ENCODE measurements at regions of chr5 and their contacts with region 1.

Region 1: DNA sequence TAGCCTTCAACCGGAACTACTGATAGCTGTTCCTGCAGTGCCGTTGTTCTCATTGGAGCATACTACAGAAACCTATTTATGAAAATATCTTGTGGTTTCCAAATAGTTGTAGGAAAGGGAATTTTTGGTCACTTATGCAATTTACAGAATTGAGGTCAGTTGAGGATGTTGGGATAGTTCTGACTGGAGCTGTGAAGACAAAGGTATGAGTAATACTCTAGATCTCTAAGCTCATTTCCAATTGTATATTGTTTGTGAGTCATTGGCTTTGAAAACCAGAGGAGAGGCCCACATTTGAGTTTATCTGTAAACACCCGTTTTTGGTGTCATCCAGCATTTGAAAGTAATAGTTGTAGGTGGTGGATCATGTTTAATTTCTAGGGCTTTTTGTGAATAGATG is 561.3 kb upstream of the WWC1 start:
- DNase-seq: no peak
- H3K4me3 ChIP-seq: no peak overlapping the region
- H3K27ac ChIP-seq: no peak overlapping the region
- H3K4me1 ChIP-seq: no peaks in the 10 kb centered on the region
- H3K27me3 ChIP-seq: no peaks in the 10 kb centered on the region
- CTCF ChIP-seq: no peak

Region 2: GRCh38 chr5:167835146-167835545 is 105.0 kb after region 1 on chr5:
- intact Hi-C with region 1: no loop called
- DNase-seq: no peak
- H3K4me3 ChIP-seq: no peak overlapping the region
- H3K27ac ChIP-seq: no peak overlapping the region
- H3K4me1 ChIP-seq: no peaks in the 10 kb centered on the region
- H3K27me3 ChIP-seq: no peaks in the 10 kb centered on the region
- CTCF ChIP-seq: no peak

Region 3: DNA sequence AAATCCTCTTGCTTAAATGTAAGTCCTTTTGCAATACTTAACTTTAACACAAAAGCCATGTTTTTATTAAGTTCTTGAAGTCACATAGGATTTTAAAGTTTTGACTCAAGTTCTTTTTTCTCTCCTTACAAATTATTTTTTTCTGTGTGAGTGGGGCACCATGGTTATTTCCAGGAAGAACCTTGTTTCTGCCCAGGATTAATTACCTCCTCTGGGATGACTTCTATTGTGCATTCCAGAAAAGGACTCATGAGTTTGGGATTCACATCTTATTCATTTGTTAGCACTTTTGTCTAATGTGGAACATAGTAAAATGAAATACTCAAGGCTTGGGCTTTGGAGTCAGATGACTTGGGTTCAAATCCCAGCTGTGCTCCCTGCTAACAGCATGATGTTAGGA is 139.9 kb after region 1 on chr5:
- intact Hi-C with region 1: no loop called
- DNase-seq: no peak
- H3K4me3 ChIP-seq: no peak overlapping the region
- H3K27ac ChIP-seq: no peak overlapping the region
- H3K4me1 ChIP-seq: no peaks in the 10 kb centered on the region
- H3K27me3 ChIP-seq: no peaks in the 10 kb centered on the region
- CTCF ChIP-seq: no peak

Region 4: DNA sequence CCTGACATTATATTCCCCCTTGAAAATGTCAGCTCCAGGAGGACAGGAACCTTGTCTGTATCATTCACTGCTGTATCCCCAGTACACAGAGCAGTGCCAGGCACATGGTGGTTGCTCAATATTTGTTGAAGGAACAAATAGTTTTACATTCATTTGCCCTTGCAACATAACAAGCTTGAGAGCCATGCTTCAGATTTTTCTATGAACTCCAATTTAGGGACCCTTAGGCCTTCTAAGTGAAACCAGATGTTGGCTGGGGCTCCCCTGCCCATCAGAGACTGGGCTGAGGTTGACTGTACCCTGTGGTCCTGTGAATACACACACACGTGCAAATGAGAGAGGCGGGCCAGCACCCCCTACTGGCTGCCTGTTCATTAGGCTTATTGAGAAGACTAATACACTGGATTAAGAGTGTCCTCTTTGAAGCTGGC is 346.5 kb after region 1 on chr5:
- intact Hi-C with region 1: no loop called
- DNase-seq: peak; percentile 35
- H3K4me3 ChIP-seq: no peak overlapping the region
- H3K27ac ChIP-seq: peak overlapping the region; percentile 77
- H3K4me1 ChIP-seq: peaks cover 52% of the 10 kb centered on the region
- H3K27me3 ChIP-seq: no peaks in the 10 kb centered on the region
- CTCF ChIP-seq: peak; percentile 52

Region 5: GRCh38 chr5:168209997-168210396 is 479.9 kb after region 1 on chr5:
- intact Hi-C with region 1: loop called (anchors 5 kb)
- DNase-seq: no peak
- H3K4me3 ChIP-seq: no peak overlapping the region
- H3K27ac ChIP-seq: peak overlapping the region; percentile 45
- H3K4me1 ChIP-seq: peaks cover 33% of the 10 kb centered on the region
- H3K27me3 ChIP-seq: no peaks in the 10 kb centered on the region
- CTCF ChIP-seq: no peak